H1 (cell line): ENCODE measurements at regions of chr11 and their contacts with region 1.

Region 1: GRCh38 chr11:1936776-1937615 is 10.1 kb upstream of the MRPL23 start:
- DNase-seq: peak in 1 of 2 experiments; percentile 49
- H3K4me3 ChIP-seq: no peak overlapping the region
- H3K27ac ChIP-seq: no peak overlapping the region
- H3K4me1 ChIP-seq: peaks cover 0 to 3% (median 0%) of the 10 kb centered on the region in 4 experiments; a peak in 1 of 7 replicates
- H3K27me3 ChIP-seq: no peaks in the 10 kb centered on the region
- CTCF ChIP-seq: no peak
- EP300 ChIP-seq: no peak
- POLR2A ChIP-seq: no peak
- RAD21 ChIP-seq: no peak

Region 2: GRCh38 chr11:1908618-1909017 is 28.4 kb before region 1 on chr11:
- CTCF ChIA-PET with region 1: interaction called, 10 read pairs
- POLR2A ChIA-PET with region 1: interaction called, 3 read pairs
- DNase-seq: no peak
- H3K4me3 ChIP-seq: no peak overlapping the region
- H3K27ac ChIP-seq: no peak overlapping the region
- H3K4me1 ChIP-seq: peaks cover 2 to 10% (median 6%) of the 10 kb centered on the region in 4 experiments; a peak in 6 of 7 replicates
- H3K27me3 ChIP-seq: peaks cover 0 to 3% (median 2%) of the 10 kb centered on the region in 4 experiments; a peak in 1 of 7 replicates
- CTCF ChIP-seq: no peak
- EP300 ChIP-seq: no peak
- POLR2A ChIP-seq: no peak
- RAD21 ChIP-seq: no peak

Region 3: DNA sequence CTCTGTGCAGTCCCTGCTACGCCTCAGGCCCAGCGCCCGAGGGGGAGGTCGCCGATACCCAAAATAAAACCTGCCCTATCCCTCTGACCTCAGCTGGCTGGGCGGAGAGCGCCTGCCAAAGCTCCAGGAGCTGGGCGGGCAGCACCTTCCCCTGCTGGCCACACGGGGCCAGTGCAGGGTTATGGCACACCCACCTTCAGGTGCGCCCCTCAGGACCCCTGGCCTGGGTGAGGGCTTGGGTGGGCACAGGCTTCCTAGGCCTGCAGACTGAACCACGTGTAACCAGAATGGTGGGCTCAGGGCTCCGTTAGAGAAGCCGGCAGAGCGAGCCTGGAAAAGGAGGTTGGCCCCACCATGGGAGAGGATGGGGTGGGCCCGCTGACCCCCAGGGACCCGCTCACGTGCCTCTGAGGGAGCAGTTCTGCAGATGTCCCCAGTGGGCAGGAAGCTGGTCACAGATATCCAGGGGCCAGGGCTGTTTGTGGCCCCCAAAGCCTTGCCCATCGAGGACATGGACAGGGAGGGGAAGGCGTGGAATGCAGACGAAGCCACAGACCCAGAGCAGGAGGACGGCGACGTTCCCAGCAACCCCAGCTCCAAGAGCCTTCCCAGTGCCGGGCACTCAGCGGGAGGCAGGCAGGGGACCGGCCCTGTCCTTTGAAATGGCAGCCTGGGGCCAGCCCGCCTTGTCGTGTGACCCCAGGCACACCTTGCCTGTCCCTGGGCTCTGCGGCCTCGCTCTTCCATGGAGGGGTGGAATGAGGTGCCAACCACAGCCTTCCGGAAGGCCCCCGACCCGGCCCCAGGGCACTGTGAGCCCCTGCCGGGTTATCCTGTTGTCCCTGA is 19.1 kb before region 1 on chr11:
- CTCF ChIA-PET with region 1: interaction called, 15 read pairs
- POLR2A ChIA-PET with region 1: no interaction called
- DNase-seq: no peak
- H3K4me3 ChIP-seq: no peak overlapping the region
- H3K27ac ChIP-seq: no peak overlapping the region
- H3K4me1 ChIP-seq: peaks cover 0 to 3% (median 3%) of the 10 kb centered on the region in 4 experiments; a peak in 4 of 7 replicates
- H3K27me3 ChIP-seq: no peaks in the 10 kb centered on the region
- CTCF ChIP-seq: peak; percentile 74 to 80 (median 77)
- EP300 ChIP-seq: no peak
- POLR2A ChIP-seq: no peak
- RAD21 ChIP-seq: peak; percentile 52 to 68

Region 4: DNA sequence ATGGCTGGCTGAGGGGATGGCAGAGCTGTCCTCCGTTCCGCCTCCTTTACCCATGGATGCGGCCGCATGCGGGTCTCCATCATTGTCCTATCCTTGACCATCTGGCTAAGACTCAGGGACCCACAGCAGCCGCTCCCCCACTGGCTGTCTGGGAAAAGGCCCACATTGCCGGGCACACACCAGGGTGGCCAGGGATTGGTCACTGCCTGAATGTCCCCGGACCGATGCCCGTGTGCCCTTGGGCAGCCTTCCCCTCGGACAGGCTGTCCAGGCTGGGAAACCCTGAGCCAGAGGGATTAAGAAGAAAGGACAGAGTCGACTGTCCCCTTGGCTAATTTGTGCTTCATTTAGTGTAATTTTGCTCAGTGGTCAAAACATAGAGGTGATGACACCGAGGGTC is 38.2 kb after region 1 on chr11:
- CTCF ChIA-PET with region 1: no interaction called
- POLR2A ChIA-PET with region 1: no interaction called
- DNase-seq: no peak
- H3K4me3 ChIP-seq: no peak overlapping the region
- H3K27ac ChIP-seq: no peak overlapping the region
- H3K4me1 ChIP-seq: no peaks in the 10 kb centered on the region
- H3K27me3 ChIP-seq: no peaks in the 10 kb centered on the region
- CTCF ChIP-seq: no peak
- EP300 ChIP-seq: no peak
- POLR2A ChIP-seq: no peak
- RAD21 ChIP-seq: no peak